Calu3 (cell line): ENCODE measurements at regions of chr4 and their contacts with region 1.

Region 1: DNA sequence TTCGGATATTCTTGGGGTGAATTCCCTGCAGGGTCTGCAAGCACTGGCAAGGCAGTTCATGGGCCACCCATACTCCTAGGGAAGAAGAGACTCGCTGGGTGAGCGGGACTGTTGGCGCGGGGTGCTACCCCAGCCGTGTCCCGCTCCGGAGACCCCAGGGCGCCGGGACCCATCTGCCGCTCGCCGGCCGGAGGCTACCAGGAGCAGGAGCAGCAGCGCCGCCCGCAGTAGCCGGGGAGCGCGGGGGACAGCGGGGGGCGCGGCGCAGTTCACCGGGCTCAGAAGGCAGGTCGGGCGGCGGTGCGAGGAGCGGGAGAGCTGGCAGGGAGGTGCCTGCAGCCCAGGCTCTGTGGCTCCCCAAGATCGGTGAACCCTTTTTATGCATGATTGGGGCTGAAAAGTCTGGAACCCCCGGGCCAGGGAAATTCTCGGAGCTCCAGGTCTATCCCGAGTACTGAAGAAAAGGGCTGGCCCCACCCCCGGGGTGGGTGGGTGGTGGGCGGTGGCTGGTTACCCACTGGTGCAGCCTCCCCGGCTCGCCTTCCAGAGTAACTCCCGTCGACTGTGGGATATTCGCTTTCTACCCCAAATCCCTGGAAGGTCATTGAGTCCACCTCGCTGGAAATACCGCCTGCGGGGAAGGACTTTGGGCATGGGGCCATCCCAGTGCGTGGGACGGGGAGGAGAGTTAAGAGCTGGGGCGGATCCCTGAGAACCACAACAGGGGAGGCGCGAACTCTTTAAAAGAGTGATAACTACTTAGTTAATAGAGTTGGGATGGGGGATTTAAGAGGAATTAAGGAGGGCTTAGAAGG is 37.6 kb downstream of the PF4 start:
- DNase-seq: peak; percentile 45
- H3K4me3 Mint-ChIP-seq: peak overlapping the region; percentile 77
- H3K27ac Mint-ChIP-seq: peak overlapping the region; percentile 60
- H3K4me1 Mint-ChIP-seq: peaks cover 18% of the 10 kb centered on the region
- H3K27me3 Mint-ChIP-seq: peaks cover 14% of the 10 kb centered on the region
- CTCF ChIP-seq: no peak

Region 2: GRCh38 chr4:73990988-73991741 is 46.9 kb after region 1 on chr4:
- CTCF ChIA-PET with region 1: no interaction called
- intact Hi-C with region 1: loop called (anchors 5 kb)
- DNase-seq: no peak
- H3K4me3 Mint-ChIP-seq: no peak overlapping the region
- H3K27ac Mint-ChIP-seq: no peak overlapping the region
- H3K4me1 Mint-ChIP-seq: peaks cover 24% of the 10 kb centered on the region
- H3K27me3 Mint-ChIP-seq: no peaks in the 10 kb centered on the region
- CTCF ChIP-seq: no peak